ENCODE measurements at regions of chr2 and their contacts with region 1.

Region 1: DNA sequence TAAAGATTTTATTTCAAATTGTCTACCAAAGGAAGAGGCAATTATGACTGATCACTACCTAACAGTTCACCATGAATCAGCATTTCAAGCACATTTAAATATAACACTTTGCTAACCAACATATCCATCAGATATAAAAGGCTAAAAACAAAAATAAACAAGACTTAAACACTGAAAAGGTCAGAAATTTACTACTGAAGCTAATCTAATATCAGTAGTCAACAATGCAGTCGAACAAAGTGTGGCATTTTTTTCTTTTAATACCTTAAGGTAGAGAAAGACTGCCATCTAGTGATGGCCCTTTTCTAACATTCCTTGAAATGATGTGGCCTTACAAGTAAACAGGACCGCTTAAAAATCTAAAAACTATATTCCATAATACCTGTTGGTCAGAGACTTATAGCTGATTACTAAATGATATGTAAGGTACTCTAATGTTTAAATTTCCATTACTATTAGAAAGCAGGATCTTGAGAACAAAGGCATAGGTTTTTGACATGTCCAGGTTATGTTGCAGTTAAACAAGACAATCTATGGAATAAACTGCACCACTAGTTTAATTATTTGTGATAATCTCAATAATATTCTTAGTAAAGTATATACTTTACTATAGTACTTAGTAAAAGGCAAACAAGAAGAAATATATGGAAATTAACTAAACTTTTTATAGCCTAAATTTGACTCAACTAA is 80.0 kb downstream of the EXOC6B start:
- DNase-seq: no peak
- H3K4me3 ChIP-seq: no peak overlapping the region
- H3K27ac ChIP-seq: no peak overlapping the region
- H3K4me1 ChIP-seq: no peaks in the 10 kb centered on the region
- H3K27me3 ChIP-seq: no peaks in the 10 kb centered on the region
- CTCF ChIP-seq: peak; percentile 52 to 61 (median 56)
- EP300 ChIP-seq: no peak
- POLR2A ChIP-seq: no peak

Region 2: GRCh38 chr2:71545572-71546274 is 1200.1 kb before region 1 on chr2:
- in situ Hi-C with region 1: loop called in 2 of 4 experiments (anchors 25 kb)
- intact Hi-C with region 1: no loop called
- DNase-seq: peak; percentile 36
- H3K4me3 ChIP-seq: peak overlapping the region in 3 of 4 donors; percentile 3 to 29 (median 11)
- H3K27ac ChIP-seq: peak overlapping the region in 1 of 4 donors; percentile 39
- H3K4me1 ChIP-seq: peaks cover 0 to 19% (median 8%) of the 10 kb centered on the region in 4 donors
- H3K27me3 ChIP-seq: peaks cover 10% of the 10 kb centered on the region
- CTCF ChIP-seq: peak; percentile 54 to 61 (median 58)
- EP300 ChIP-seq: no peak
- POLR2A ChIP-seq: no peak

Region 3: DNA sequence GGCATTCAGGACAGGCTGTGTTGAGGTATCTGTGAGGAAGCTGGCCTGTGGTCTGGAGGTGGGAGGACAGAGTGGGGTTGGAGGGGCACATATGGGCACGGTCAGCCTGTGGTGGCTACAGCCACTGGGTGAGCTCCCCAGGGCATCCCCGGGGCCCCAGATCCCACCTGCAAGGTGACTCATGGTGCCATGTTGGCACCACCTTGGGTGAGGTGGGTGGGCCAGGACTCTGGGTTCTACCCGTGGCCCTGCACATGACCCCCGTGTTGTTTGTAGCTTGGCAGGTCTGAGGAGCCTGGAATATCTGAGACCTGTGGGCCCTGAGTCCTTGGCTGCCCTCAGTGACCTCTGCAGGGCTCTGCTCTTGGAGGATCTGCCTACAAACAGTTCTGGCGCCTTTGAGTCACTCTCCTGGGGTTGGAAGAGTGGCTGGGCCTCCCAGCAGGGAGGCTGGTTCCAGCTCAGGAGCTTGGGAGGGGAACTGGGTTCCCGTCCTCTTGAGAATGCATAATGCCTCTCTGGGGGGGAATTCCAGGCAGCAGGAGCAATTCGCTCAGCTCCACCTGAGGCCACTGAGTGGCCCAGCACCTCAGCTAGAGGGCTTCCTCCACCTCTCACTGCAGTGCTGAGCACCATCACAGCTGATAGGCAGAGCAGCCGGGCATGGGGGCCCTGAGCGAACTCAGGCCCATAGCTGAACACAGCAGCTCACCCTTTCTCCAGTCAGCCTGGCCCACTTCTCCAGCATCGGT is 1187.3 kb before region 1 on chr2:
- in situ Hi-C with region 1: loop called in 1 of 4 experiments (anchors 25 kb)
- intact Hi-C with region 1: no loop called
- DNase-seq: no peak
- H3K4me3 ChIP-seq: no peak overlapping the region
- H3K27ac ChIP-seq: no peak overlapping the region
- H3K4me1 ChIP-seq: no peaks in the 10 kb centered on the region
- H3K27me3 ChIP-seq: no peaks in the 10 kb centered on the region
- CTCF ChIP-seq: no peak
- EP300 ChIP-seq: no peak
- POLR2A ChIP-seq: no peak

Region 4: DNA sequence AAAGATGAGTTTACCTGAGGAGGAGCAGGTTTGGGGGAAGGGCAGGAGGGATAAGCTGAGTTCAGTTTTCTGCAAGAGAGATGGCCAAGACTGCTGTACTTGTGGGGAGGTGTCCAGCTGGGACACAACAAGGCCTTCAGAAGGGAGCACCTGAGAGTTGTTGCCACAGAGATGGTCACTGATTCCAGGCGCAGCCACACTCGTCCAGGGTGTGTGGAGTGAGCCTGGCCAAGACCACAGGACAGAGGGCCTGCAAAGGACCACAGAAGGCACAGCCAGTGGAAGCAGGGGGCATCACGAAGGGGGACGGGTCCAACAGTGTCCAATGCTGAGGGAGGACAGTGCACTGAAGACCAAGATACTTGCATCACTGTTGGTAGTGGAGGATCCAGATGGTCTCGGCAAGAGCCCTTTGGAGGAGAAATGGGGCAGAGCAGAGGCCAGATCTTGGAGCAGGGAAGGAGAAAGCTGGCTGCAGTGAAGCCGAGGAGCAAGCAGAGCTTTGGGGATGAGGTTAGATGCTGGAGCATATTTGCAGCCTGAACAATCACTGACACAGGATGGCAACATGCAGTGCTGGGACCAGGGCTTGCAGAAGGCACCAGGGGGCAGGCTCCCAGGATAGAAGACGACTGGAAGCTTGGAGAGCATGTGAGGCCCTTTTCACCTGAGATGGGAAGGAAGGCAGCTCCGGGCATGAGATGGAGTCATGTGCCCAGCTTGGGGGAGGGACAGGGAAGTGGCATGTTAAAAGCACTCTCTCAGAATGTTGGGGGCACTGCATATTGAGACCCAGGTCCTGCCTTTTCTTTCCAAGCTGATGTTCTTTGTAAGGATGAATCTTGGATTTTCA is 812.1 kb before region 1 on chr2:
- in situ Hi-C with region 1: loop called in 1 of 4 experiments (anchors 25 kb)
- intact Hi-C with region 1: loop called (anchors 5 kb)
- DNase-seq: no peak
- H3K4me3 ChIP-seq: no peak overlapping the region
- H3K27ac ChIP-seq: no peak overlapping the region
- H3K4me1 ChIP-seq: peaks cover 0 to 17% (median 7%) of the 10 kb centered on the region in 4 donors
- H3K27me3 ChIP-seq: no peaks in the 10 kb centered on the region
- CTCF ChIP-seq: no peak
- EP300 ChIP-seq: no peak
- POLR2A ChIP-seq: no peak

Region 5: GRCh38 chr2:72137498-72138010 is 608.3 kb before region 1 on chr2:
- in situ Hi-C with region 1: loop called in 1 of 4 experiments (anchors 25 kb)
- intact Hi-C with region 1: no loop called
- DNase-seq: peak; percentile 70
- H3K4me3 ChIP-seq: no peak overlapping the region
- H3K27ac ChIP-seq: no peak overlapping the region
- H3K4me1 ChIP-seq: peaks cover 13 to 19% (median 15%) of the 10 kb centered on the region in 4 donors
- H3K27me3 ChIP-seq: peaks cover 4% of the 10 kb centered on the region
- CTCF ChIP-seq: peak; percentile 81 to 95 (median 91)
- EP300 ChIP-seq: no peak
- POLR2A ChIP-seq: no peak

Region 6: DNA sequence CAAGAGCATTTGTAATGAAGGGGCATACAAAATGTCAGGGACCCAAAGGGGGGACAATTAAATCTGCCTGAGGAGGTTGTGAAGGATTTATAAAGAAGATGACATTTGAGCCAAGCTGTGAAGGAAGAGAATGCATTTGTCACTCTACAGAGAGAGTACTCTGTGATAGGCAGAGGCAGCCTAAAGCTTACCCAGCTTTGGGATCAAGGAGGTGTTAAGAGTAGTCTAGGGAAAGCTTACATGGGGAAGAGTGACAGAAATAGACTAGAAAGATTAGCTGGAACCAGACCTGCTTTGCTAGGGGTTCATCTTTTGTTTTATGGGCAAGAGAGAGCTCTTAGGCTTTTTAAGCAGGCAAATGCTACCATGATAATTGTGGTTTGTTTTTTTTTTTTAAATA is 429.1 kb before region 1 on chr2:
- in situ Hi-C with region 1: no loop called
- intact Hi-C with region 1: no loop called
- DNase-seq: no peak
- H3K4me3 ChIP-seq: no peak overlapping the region
- H3K27ac ChIP-seq: no peak overlapping the region
- H3K4me1 ChIP-seq: no peaks in the 10 kb centered on the region
- H3K27me3 ChIP-seq: no peaks in the 10 kb centered on the region
- CTCF ChIP-seq: no peak
- EP300 ChIP-seq: no peak
- POLR2A ChIP-seq: no peak

Region 7: DNA sequence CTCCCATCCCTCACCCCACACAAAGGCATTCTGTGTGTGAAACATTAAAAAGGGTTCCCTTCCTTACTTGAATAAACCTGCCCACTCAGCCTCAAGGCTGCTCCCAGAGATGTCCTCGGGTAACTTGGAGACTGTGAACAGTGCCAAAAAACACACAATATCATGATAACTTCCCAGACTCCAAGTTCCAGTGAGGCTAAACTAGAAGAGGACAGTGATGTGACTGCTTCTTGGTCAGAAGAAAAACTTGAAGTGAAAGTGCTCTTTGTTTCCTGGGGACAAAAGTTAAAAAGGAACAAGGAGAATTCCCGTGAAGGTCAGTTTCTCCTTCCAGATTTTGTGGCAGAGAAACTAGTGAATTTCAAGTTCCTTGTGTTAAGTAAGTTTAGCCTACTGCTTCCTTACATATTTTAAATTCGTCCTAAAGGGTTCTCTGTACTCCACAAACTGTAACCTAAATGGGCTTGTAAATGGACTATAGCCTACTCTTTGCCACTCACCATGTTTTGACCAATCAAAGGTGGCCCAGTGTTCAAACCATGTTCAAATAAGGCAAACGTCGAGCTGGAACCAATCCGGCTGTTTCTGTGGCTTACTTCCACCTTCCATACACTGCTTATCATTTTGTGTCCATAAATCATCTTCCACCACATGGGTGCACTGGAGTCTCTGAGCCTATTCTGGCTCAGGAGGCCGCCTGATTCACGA is 970.9 kb after region 1 on chr2:
- in situ Hi-C with region 1: no loop called
- intact Hi-C with region 1: no loop called
- DNase-seq: no peak
- H3K4me3 ChIP-seq: no peak overlapping the region
- H3K27ac ChIP-seq: peak overlapping the region in 2 of 4 donors; percentile 3 to 25
- H3K4me1 ChIP-seq: no peaks in the 10 kb centered on the region
- H3K27me3 ChIP-seq: no peaks in the 10 kb centered on the region
- CTCF ChIP-seq: no peak
- EP300 ChIP-seq: no peak
- POLR2A ChIP-seq: no peak